GM18951 (cell line): ENCODE measurements at regions of chr11 and their contacts with region 1.

Region 1: GRCh38 chr11:94623120-94623735 is 56.1 kb downstream of the PIWIL4 start:
- POLR2A ChIP-seq: no peak

Region 2: DNA sequence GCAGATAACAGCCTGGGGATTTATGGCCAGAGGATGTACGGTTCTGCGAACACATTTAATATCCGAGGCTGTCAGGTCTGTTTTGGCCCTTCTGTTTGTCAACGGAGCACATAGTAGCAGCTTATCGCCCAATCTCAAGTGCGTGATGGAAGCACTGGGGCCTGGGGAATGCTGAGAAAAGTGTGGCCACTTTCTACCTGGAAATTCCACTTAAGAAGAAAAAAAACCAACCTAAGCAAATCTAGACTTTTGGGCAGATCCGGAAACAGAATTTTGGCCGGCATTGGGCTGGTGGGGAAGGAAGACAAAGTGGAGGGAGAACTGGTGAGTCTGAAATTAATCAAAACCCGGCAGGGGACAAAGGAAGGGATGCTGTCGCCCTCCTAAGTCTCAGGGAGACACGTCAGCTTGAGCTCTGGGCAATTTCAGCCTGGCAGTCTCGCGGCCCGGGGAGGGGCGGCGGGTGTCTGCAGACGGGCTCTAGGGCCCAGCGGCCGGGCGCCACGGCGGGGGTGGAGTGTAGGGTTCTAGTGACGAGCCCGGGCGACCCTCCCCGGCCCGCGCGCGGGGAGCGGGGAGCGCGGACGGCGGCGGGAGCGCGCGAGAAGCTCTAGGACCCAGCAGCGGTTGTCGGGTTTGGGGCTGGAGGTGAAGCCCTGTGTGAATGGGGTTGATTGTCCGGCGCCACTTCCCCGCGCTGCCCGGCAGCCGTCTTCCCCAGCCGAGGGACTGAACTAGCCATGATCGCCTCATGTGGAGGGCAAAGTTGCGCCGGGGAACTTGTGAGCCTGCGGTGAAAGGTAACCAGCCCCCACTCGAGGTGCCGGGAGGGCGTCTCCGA is 144.8 kb after region 1 on chr11 and contains the start of gene AMOTL1:
- in situ Hi-C with region 1: loop called (anchors 10 kb)
- POLR2A ChIP-seq: peak; percentile 66

Region 3: DNA sequence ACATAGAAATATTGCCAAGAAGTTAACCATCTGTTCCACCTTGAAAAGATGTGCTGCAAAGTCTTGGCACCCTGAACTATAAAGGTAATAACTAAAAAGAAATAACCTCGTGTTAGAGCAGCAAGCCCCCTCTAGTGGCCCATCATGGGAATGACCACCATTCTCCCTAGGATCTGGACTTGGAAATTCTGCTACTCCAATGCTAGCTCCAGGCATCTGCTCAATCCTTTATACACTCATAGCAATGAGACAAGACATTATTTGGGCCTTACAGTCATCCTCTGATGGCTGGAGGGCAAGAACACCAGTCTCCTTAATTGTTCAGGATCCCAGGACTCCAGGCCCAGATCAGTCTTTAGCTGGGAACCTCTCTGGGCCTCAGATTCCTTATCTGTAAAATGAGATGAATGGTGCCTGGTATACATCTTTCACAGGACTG is 274.1 kb after region 1 on chr11:
- in situ Hi-C with region 1: loop called (anchors 10 kb)
- POLR2A ChIP-seq: no peak